ENCODE measurements at regions of chr1 and their contacts with region 1.

Region 1: GRCh38 chr1:198584163-198584562 is 43.7 kb upstream of the ATP6V1G3 start:
- DNase-seq: no peak
- ATAC-seq: no peak
- H3K4me3 ChIP-seq: no peak overlapping the region
- H3K27ac ChIP-seq: no peak overlapping the region
- H3K4me1 ChIP-seq: no peaks in the 10 kb centered on the region
- H3K27me3 ChIP-seq: no peaks in the 10 kb centered on the region
- CTCF ChIP-seq: no peak
- POLR2A ChIP-seq: no peak
- RAD21 ChIP-seq: no peak

Region 2: GRCh38 chr1:197156691-197157090 is 1427.5 kb before region 1 on chr1:
- CTCF ChIA-PET with region 1: no interaction called
- POLR2A ChIA-PET with region 1: no interaction called
- dilution Hi-C with region 1: no loop called
- in situ Hi-C with region 1: no loop called
- intact Hi-C with region 1: no loop called
- DNase-seq: no peak
- ATAC-seq: no peak
- H3K4me3 ChIP-seq: no peak overlapping the region
- H3K27ac ChIP-seq: no peak overlapping the region
- H3K4me1 ChIP-seq: peaks cover 2% of the 10 kb centered on the region; the same call in 1 of the 2 replicates
- H3K27me3 ChIP-seq: no peaks in the 10 kb centered on the region
- CTCF ChIP-seq: no peak
- POLR2A ChIP-seq: no peak
- RAD21 ChIP-seq: no peak

Region 3: DNA sequence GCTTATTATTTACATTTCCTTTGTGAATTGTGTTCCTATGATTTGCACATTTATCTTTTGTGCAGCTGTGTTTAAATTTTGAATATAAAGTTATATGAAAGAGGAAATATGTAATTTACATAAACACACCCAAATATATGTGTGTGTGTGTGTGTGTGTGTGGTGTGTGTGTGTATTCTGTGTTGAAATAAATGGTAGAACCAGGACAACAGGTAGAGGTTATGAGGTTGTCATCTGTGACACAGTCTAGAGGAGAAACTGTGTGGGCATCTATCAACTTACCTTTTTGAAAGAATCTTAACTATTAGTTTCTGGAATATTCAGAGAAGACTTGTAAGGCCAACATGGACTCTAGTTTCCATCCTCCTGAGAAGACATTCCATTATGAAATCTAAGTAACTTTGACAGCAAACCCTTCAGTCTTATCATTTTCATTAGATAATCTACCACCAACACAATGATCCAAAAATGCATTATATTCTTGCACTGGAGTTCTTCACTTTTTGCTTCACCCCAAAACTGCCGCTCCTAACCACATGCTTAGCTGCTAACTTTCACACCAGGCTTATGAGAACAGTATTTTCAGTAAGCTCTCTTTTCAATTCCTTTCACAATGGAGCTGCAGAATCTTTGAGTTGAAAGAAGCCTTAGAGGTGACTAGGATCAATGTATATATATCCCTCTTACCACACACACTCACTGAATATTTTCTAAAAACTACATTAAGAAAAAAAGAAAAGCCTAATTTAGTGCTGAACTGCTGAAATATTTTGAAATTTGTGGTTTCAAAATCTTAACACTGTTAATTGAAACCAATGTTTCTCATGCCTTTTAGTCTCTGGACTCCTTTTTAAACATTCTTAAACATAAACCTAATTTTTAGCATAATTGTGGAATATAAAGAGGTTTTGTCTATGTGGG is 76.4 kb after region 1 on chr1:
- CTCF ChIA-PET with region 1: no interaction called
- POLR2A ChIA-PET with region 1: no interaction called
- dilution Hi-C with region 1: no loop called
- in situ Hi-C with region 1: no loop called
- intact Hi-C with region 1: loop called (anchors 5 kb)
- DNase-seq: no peak
- ATAC-seq: no peak
- H3K4me3 ChIP-seq: no peak overlapping the region
- H3K27ac ChIP-seq: no peak overlapping the region
- H3K4me1 ChIP-seq: peaks cover 8% of the 10 kb centered on the region
- H3K27me3 ChIP-seq: no peaks in the 10 kb centered on the region
- CTCF ChIP-seq: no peak
- POLR2A ChIP-seq: no peak
- RAD21 ChIP-seq: no peak